CD4-positive, alpha-beta memory T cell (primary cell): ENCODE measurements at regions of chr7 and their contacts with region 1.

Region 1: GRCh38 chr7:7103343-7104313 is 78.7 kb upstream of the C1GALT1 start:
- DNase-seq: peak in 4 of 5 donors; percentile 54 to 66 (median 60)
- H3K4me3 ChIP-seq: no peak overlapping the region
- H3K4me3 Mint-ChIP-seq: peak overlapping the region in 1 of 8 donors; percentile 35
- H3K27ac ChIP-seq: no peak overlapping the region
- H3K27ac Mint-ChIP-seq: peak overlapping the region in 2 of 7 donors; percentile 14 to 75
- H3K4me1 ChIP-seq: peaks cover 15% of the 10 kb centered on the region
- H3K4me1 Mint-ChIP-seq: peaks cover 9 to 24% (median 15%) of the 10 kb centered on the region in 4 donors
- H3K27me3 ChIP-seq: no peaks in the 10 kb centered on the region
- H3K27me3 Mint-ChIP-seq: no peaks in the 10 kb centered on the region

Region 2: GRCh38 chr7:7114706-7115295 is 11.2 kb after region 1 on chr7:
- CTCF ChIA-PET with region 1: interaction called, 16 read pairs
- POLR2A ChIA-PET with region 1: interaction called, 4 read pairs
- intact Hi-C with region 1: no loop called
- DNase-seq: no peak
- H3K4me3 ChIP-seq: no peak overlapping the region
- H3K4me3 Mint-ChIP-seq: no peak overlapping the region
- H3K27ac ChIP-seq: no peak overlapping the region
- H3K27ac Mint-ChIP-seq: no peak overlapping the region
- H3K4me1 ChIP-seq: no peaks in the 10 kb centered on the region
- H3K4me1 Mint-ChIP-seq: peaks cover 0 to 2% (median 0%) of the 10 kb centered on the region in 4 donors
- H3K27me3 ChIP-seq: no peaks in the 10 kb centered on the region
- H3K27me3 Mint-ChIP-seq: peaks cover 2% of the 10 kb centered on the region in 2 donors

Region 3: GRCh38 chr7:7257899-7258692 is 154.5 kb after region 1 on chr7:
- CTCF ChIA-PET with region 1: interaction called, 11 read pairs
- POLR2A ChIA-PET with region 1: interaction called, 4 read pairs
- intact Hi-C with region 1: loop called (anchors 5 kb)
- DNase-seq: no peak
- H3K4me3 ChIP-seq: no peak overlapping the region
- H3K4me3 Mint-ChIP-seq: peak overlapping the region; percentile 49 to 86 (median 82)
- H3K27ac ChIP-seq: peak overlapping the region; percentile 69
- H3K27ac Mint-ChIP-seq: peak overlapping the region; percentile 76 to 95 (median 91)
- H3K4me1 ChIP-seq: peaks cover 22% of the 10 kb centered on the region
- H3K4me1 Mint-ChIP-seq: peaks cover 24 to 44% (median 31%) of the 10 kb centered on the region in 4 donors
- H3K27me3 ChIP-seq: no peaks in the 10 kb centered on the region
- H3K27me3 Mint-ChIP-seq: no peaks in the 10 kb centered on the region

Region 4: GRCh38 chr7:7424151-7424873 is 320.7 kb after region 1 on chr7:
- CTCF ChIA-PET with region 1: interaction called, 23 read pairs
- POLR2A ChIA-PET with region 1: interaction called, 3 read pairs
- intact Hi-C with region 1: loop called (anchors 5 kb)
- DNase-seq: peak in 4 of 5 donors; percentile 6 to 32 (median 29)
- H3K4me3 ChIP-seq: peak overlapping the region; percentile 33 to 41
- H3K4me3 Mint-ChIP-seq: peak overlapping the region in 7 of 8 donors; percentile 81 to 89 (median 85)
- H3K27ac ChIP-seq: no peak overlapping the region
- H3K27ac Mint-ChIP-seq: peak overlapping the region in 4 of 7 donors; percentile 17 to 71 (median 53)
- H3K4me1 ChIP-seq: no peaks in the 10 kb centered on the region
- H3K4me1 Mint-ChIP-seq: peaks cover 0 to 10% (median 6%) of the 10 kb centered on the region in 4 donors
- H3K27me3 ChIP-seq: no peaks in the 10 kb centered on the region
- H3K27me3 Mint-ChIP-seq: peaks cover 0 to 1% of the 10 kb centered on the region in 2 donors

Region 5: GRCh38 chr7:7542251-7542835 is 438.7 kb after region 1 on chr7:
- CTCF ChIA-PET with region 1: interaction called, 87 read pairs
- POLR2A ChIA-PET with region 1: interaction called, 3 read pairs
- intact Hi-C with region 1: loop called (anchors 2 kb)
- DNase-seq: no peak
- H3K4me3 ChIP-seq: no peak overlapping the region
- H3K4me3 Mint-ChIP-seq: no peak overlapping the region
- H3K27ac ChIP-seq: no peak overlapping the region
- H3K27ac Mint-ChIP-seq: no peak overlapping the region
- H3K4me1 ChIP-seq: no peaks in the 10 kb centered on the region
- H3K4me1 Mint-ChIP-seq: peaks cover 0 to 3% (median under 1%) of the 10 kb centered on the region in 4 donors
- H3K27me3 ChIP-seq: no peaks in the 10 kb centered on the region
- H3K27me3 Mint-ChIP-seq: peaks cover 0 to 1% of the 10 kb centered on the region in 2 donors

Region 6: DNA sequence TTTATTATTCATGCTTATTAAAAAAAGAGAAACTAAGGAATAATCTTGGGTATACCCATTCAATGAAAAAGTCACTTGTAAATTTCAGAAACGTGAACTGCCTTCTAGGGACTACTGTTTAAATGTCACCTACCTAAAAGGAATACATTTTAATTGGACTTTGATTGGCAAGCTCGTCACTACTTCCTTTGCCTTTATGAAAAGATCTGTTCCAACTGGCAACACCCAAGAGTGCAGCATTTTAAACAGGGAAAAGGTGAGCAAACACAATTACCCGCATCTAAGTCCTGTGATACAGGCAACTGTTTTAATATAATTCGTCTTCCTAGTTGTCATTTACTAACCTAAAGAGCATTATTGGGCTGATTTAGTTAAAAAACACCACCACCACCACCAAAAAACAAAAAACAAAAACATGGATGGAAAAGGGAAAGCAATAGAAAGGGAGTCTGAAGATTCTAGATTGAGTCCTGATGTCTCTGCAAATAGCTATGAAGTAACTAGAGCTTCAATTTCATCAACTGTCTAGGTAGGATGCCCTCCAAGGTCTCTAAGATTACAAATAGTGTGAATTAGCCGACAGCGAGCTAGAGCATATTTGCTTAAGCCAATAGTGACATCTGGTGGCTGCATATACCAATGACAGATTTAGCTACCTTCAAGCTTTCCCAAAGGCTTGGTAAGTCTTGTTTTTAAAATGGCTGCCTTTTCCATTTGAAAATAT is 1192.2 kb after region 1 on chr7:
- CTCF ChIA-PET with region 1: interaction called, 4 read pairs
- POLR2A ChIA-PET with region 1: no interaction called
- intact Hi-C with region 1: loop called (anchors 1 kb)
- DNase-seq: peak; percentile 44 to 54 (median 52)
- H3K4me3 ChIP-seq: no peak overlapping the region
- H3K4me3 Mint-ChIP-seq: no peak overlapping the region
- H3K27ac ChIP-seq: no peak overlapping the region
- H3K27ac Mint-ChIP-seq: no peak overlapping the region
- H3K4me1 ChIP-seq: no peaks in the 10 kb centered on the region
- H3K4me1 Mint-ChIP-seq: peaks cover 0 to 1% (median 0%) of the 10 kb centered on the region in 4 donors
- H3K27me3 ChIP-seq: no peaks in the 10 kb centered on the region
- H3K27me3 Mint-ChIP-seq: peaks cover 8 to 12% of the 10 kb centered on the region in 2 donors